ENCODE measurements at regions of chr22 and their contacts with region 1.

Region 1: DNA sequence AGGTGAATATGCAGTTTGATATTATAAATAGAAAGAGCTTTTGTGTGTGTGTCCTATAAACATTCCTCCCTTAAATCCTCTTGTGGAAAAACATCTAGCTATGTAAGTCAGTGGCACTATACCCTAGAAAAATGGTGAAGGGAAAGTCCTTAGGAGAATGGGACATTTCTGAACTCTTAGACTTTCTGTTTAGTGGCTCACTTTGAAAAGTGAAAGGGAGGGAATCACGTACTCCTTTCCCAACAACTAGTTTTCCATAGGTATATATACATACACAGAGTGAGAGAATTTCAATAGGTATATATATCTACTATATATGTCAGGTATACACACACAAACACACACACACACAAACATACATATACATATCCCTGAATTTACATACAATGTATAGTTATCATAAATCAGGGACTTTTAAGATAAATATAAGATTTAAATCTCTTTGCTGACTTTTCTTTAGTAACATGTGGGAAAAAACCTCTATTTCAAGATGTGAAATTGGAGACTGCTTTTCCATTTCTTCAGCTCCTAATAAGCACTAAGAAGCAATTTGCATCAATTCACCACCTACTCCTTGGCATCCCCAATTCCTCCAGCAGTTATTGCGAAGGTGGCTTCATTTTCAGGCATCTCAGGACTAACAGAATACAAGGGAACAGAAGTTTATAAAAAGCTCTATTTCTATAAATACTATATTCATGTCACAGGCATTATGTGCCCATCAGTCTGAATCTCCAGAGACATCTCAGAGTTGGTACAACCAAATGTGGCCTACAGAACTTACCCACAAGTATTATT is 13.5 kb upstream of the DDX17 start:
- H3K4me3 Mint-ChIP-seq: no peak overlapping the region
- H3K27ac Mint-ChIP-seq: no peak overlapping the region
- H3K4me1 Mint-ChIP-seq: peaks cover 8% of the 10 kb centered on the region
- H3K27me3 Mint-ChIP-seq: peaks cover 83% of the 10 kb centered on the region

Region 2: GRCh38 chr22:38554281-38554680 is 34.6 kb after region 1 on chr22:
- intact Hi-C with region 1: loop called (anchors 5 kb)
- H3K4me3 Mint-ChIP-seq: no peak overlapping the region
- H3K27ac Mint-ChIP-seq: no peak overlapping the region
- H3K4me1 Mint-ChIP-seq: peaks cover 1% of the 10 kb centered on the region
- H3K27me3 Mint-ChIP-seq: peaks cover 69% of the 10 kb centered on the region